ENCODE measurements at regions of chr1 and their contacts with region 1.

Region 1: DNA sequence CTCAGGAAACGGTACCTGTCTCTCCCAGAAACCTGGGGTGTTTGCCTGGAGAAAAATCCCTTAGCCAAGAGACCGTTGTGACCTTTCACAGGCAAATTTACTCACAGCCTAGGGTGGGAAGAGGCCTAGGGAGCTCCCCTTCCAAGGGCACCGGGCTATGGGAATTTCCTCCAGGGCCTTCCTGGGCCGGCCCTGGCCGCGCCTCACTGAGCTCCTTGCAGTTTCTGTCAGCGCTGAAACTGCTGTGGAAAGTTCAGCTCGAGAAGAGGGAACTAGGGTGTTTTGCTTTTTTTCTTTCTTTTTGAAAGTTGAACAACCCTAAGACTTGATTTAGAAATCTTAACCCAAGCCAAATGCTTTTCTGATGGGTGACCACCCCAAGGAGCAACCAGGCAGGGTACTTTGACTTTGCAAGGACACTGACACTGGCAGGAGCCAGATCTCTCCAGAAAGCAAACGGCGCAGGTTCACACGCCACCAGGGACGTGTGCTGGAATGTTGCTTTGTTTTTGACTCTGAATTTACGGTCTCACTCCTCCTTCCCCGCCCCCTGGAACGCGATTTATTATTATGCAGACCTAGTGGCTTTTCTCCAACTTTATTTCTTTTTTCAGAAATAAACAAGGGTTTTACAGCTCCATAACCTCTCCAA is 229.6 kb upstream of the JUN start:
- DNase-seq: peak in 1 of 2 donors; percentile 60
- ATAC-seq: peak; percentile 66
- H3K4me3 ChIP-seq: no peak overlapping the region
- H3K27ac ChIP-seq: peak overlapping the region; percentile 83 to 95
- H3K4me1 ChIP-seq: peaks cover 0 to 3% of the 10 kb centered on the region in 2 donors
- H3K27me3 ChIP-seq: no peaks in the 10 kb centered on the region

Region 2: GRCh38 chr1:58816072-58816746 is 197.2 kb before region 1 on chr1:
- intact Hi-C with region 1: no loop called
- DNase-seq: peak; percentile 96 to 97
- ATAC-seq: peak; percentile 94
- H3K4me3 ChIP-seq: peak overlapping the region; percentile 57 to 68
- H3K27ac ChIP-seq: peak overlapping the region; percentile 94
- H3K4me1 ChIP-seq: no peaks in the 10 kb centered on the region
- H3K27me3 ChIP-seq: no peaks in the 10 kb centered on the region

Region 3: DNA sequence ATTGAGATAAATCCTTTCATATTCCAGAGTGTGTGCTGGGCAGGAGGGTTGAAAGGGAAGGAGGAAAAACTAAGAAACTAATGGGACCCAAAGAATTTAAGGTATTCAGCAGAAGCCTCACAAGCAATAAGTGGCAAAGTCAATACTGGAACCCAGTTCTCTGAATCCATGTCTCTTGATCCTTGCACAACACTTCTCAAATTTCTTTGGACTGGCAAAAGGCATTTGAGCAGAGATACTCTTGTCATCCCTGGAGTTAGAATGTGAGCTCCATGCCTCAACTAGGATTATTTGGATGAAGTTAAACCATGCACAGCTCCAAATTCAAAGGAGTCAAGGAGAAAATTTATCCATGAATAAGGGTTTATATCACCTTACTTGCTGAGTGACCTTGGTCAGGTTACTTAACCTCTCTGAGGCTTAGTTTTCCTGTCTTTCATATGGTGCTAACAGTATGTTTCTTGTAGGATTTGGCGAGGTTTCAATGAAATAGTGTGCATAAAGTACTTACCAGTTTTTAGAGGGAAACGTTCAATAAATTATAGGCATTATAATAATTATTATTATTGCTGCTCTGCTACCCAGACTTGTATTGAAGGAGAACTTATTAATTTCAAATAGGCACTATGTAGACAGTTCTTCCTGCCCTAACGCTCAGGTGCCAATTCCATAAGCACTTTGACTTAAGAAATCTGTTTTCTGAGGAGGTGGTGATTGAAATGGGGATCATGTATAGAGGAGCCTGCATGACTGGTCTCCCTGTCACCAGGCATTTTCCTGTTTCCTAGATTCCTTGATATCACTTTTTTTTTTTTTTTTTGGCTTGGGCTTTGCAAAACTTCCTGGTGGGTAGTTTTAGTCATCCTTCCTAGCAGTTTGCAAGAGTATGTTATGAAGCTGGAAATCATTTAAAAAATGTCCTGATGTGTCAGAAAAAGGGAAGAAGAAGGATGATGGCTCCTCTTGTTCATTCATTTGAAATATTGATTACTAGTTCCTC is 104.5 kb before region 1 on chr1:
- intact Hi-C with region 1: loop called in 1 of 2 experiments (anchors 5 kb)
- DNase-seq: no peak
- ATAC-seq: no peak
- H3K4me3 ChIP-seq: no peak overlapping the region
- H3K27ac ChIP-seq: peak overlapping the region in 1 of 2 donors; percentile 28
- H3K4me1 ChIP-seq: no peaks in the 10 kb centered on the region
- H3K27me3 ChIP-seq: no peaks in the 10 kb centered on the region

Region 4: GRCh38 chr1:58968360-58968952 is 44.9 kb before region 1 on chr1:
- intact Hi-C with region 1: loop called in 1 of 2 experiments (anchors 5 kb)
- DNase-seq: peak; percentile 89
- ATAC-seq: peak; percentile 83
- H3K4me3 ChIP-seq: no peak overlapping the region
- H3K27ac ChIP-seq: peak overlapping the region; percentile 64 to 95
- H3K4me1 ChIP-seq: peaks cover 0 to 2% of the 10 kb centered on the region in 2 donors
- H3K27me3 ChIP-seq: no peaks in the 10 kb centered on the region

Measured in aorta (tissue), 5 donors.